ENCODE measurements at regions of chr2 and their contacts with region 1.

Region 1: GRCh38 chr2:182077451-182078142 is 91.9 kb downstream of the PPP1R1C start:
- DNase-seq: peak; percentile 31
- ATAC-seq: no peak
- H3K4me3 Mint-ChIP-seq: no peak overlapping the region
- H3K27ac Mint-ChIP-seq: no peak overlapping the region
- H3K4me1 Mint-ChIP-seq: no peaks in the 10 kb centered on the region
- H3K27me3 Mint-ChIP-seq: peaks cover 5% of the 10 kb centered on the region
- CTCF ChIP-seq: peak; percentile 47

Region 2: GRCh38 chr2:181850936-181851560 is 226.5 kb before region 1 on chr2:
- CTCF ChIA-PET with region 1: no interaction called
- POLR2A ChIA-PET with region 1: no interaction called
- intact Hi-C with region 1: no loop called
- DNase-seq: no peak
- ATAC-seq: no peak
- H3K4me3 Mint-ChIP-seq: no peak overlapping the region
- H3K27ac Mint-ChIP-seq: no peak overlapping the region
- H3K4me1 Mint-ChIP-seq: no peaks in the 10 kb centered on the region
- H3K27me3 Mint-ChIP-seq: no peaks in the 10 kb centered on the region
- CTCF ChIP-seq: no peak

Region 3: GRCh38 chr2:182031956-182032355 is 45.6 kb before region 1 on chr2:
- CTCF ChIA-PET with region 1: no interaction called
- POLR2A ChIA-PET with region 1: no interaction called
- intact Hi-C with region 1: no loop called
- DNase-seq: no peak
- ATAC-seq: no peak
- H3K4me3 Mint-ChIP-seq: no peak overlapping the region
- H3K27ac Mint-ChIP-seq: no peak overlapping the region
- H3K4me1 Mint-ChIP-seq: no peaks in the 10 kb centered on the region
- H3K27me3 Mint-ChIP-seq: no peaks in the 10 kb centered on the region
- CTCF ChIP-seq: no peak

Region 4: DNA sequence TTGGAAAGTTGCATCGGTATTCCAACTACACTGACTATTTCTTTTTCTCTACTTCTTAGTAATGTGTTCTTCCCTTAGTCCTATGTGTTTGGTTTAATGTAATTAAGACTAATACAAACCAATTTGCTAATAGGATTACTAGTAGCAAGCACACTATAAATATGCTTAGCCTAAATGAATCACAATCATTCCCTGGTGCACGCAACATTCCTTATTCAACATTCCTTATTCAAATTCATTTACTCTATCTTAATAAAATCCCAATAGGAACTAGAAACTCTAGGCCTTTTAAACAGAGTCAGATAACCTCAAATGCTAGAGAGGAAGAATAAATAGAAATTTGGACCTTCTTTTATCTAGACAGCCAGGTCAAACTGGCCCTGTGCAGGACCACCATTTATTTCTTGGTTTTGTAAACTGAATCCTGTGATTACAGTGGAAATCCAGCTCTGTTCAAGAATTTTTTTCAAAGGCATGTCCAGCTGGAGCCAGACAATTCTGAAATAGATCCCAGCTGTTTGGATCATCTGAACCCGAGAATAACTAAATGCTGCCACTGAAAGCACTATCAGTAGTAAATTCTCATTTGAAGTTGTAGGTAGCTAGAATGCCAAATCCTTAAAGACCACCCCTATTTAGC is 11.2 kb after region 1 on chr2:
- CTCF ChIA-PET with region 1: interaction called, 13 read pairs
- POLR2A ChIA-PET with region 1: no interaction called
- intact Hi-C with region 1: no loop called
- DNase-seq: no peak
- ATAC-seq: no peak
- H3K4me3 Mint-ChIP-seq: no peak overlapping the region
- H3K27ac Mint-ChIP-seq: no peak overlapping the region
- H3K4me1 Mint-ChIP-seq: no peaks in the 10 kb centered on the region
- H3K27me3 Mint-ChIP-seq: peaks cover 6% of the 10 kb centered on the region
- CTCF ChIP-seq: no peak

Region 5: DNA sequence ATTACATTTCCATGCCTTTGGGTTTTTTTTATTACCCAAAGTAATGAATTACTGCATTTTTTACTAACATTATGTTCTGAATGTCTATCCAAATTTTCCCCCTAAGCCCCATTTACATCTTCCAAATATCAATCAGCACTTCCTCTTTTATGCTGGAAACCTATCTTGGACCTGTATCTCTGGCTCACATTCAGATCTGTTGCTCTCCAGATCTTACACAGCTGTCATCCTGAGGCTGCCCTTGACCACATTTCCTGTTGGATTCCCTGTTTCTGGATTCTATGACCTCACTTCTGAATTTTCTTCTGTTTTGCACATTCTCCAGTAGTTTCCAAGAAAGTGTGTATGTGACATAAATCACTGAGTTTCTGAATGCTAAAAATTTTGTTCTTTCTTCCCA is 202.5 kb after region 1 on chr2:
- CTCF ChIA-PET with region 1: no interaction called
- POLR2A ChIA-PET with region 1: no interaction called
- intact Hi-C with region 1: no loop called
- DNase-seq: no peak
- ATAC-seq: no peak
- H3K4me3 Mint-ChIP-seq: no peak overlapping the region
- H3K27ac Mint-ChIP-seq: no peak overlapping the region
- H3K4me1 Mint-ChIP-seq: no peaks in the 10 kb centered on the region
- H3K27me3 Mint-ChIP-seq: no peaks in the 10 kb centered on the region
- CTCF ChIP-seq: no peak